ENCODE measurements at regions of chr20 and their contacts with region 1.

Region 1: DNA sequence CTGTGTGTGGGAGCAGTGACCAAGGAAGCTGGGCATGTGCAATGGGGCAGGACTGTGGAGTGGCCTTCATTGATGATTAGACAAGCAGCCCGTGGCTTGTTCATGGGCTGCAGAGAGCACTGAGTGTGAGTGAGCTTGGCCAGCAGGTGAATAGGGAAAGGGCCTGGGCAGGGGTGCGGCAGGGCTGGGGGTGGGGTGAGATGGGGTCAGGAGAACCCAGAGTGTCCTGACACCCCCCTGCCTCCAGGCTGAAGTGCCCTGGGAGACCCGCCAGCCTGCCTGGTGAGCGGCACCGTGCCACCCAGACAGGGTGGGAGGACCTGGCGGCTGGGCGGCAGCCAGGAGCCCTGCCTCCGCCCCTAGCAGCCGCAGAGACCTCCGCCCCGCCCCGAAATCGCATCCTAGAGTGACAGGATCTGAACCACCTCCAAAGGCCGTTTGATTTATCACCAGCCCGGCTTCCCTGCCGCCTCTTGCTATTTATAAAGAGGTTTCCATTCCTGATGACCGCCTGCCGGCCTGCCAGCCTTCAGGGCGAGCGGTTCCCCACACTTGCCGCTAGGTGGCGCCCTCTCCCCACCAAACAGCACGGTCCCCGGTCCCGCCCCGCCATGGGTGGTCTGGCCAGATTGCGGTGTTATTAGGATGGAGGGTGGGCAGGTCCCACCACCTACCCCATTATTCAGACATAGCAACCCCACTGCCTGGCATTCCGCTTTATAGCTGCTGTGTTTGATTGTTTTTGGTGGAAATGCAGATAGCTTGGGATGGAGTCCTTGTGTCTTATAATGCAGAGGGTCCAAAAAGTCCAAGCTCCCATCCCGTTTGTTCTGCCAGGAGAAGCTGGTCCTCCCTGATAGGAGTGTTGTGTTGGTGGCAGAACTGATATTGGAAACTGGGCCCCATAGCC is 3.5 kb downstream of the MYLK2 start:
- DNase-seq: no peak
- H3K4me3 ChIP-seq: no peak overlapping the region
- CTCF ChIP-seq: peak; percentile 98

Region 2: DNA sequence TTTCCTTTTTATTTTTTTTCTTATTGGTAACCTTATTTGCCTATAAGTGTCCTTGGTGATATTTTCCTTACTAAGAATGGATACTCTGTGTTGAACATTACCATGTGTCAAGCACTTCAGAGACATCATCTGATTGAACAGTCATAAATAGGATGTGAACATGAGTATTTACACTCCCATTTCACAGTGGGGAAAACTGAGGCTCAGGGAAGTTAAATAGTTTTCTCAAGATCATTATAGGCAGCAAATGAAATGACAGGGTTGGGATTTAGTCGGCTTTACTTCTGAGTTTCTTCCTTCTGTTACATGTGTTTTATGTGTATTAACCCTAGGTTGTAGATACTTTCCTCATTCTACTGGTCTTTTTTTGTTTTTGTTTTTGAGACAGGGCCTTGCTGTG is 48.3 kb before region 1 on chr20:
- CTCF ChIA-PET with region 1: no interaction called
- POLR2A ChIA-PET with region 1: no interaction called
- DNase-seq: no peak
- H3K4me3 ChIP-seq: no peak overlapping the region
- CTCF ChIP-seq: no peak

Region 3: GRCh38 chr20:31795390-31795789 is 27.3 kb before region 1 on chr20:
- CTCF ChIA-PET with region 1: interaction called, 14 read pairs
- POLR2A ChIA-PET with region 1: no interaction called
- DNase-seq: no peak
- H3K4me3 ChIP-seq: no peak overlapping the region
- CTCF ChIP-seq: no peak

Region 4: DNA sequence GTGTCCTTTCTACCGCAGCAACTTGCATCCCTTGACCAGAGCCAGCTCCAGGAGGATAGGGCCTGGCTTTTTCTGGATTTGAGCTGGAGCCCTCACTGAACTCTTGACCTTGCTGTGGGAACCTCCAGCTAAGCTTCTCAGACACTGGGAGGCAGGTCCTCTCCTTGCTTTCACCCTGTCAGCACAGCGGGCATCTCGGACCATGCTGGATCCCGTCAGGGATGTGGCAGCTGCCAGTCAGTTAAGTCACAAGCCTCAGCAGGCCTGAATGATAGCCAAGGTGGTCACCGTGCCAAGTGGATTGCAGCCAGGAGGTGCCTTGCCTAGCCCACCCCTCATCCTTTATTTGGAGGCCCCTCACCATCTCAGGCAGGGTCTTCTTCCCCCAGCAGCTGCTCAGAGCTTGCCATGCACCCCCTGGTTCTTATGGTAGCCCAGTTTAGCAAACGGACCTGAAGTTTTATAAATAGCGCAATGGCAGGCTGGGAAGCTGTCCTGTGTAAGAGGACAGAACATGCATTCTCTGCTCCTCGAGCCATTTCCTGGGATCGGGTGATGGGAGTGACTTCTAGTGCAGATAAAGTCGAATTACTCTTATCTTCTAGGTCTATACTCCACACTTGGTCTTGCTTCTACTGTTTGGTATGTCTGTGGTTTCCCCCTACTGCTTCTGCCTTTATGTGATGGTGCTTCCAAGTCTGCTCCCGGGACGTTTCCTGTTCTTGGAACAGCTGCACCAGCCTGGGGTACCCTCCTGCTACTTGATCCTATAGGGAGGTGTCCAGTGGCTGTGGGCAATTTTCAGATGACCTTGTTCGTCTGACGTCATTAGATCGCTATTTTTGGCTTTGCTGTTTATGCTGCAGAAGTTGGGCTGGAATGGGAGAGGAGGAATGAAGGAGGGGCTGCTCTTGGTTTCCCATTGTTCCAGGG is 10.6 kb before region 1 on chr20:
- CTCF ChIA-PET with region 1: interaction called, 91 read pairs
- POLR2A ChIA-PET with region 1: no interaction called
- DNase-seq: no peak
- H3K4me3 ChIP-seq: no peak overlapping the region
- CTCF ChIP-seq: no peak

Region 5: GRCh38 chr20:31835977-31836852 is 13.5 kb after region 1 on chr20:
- CTCF ChIA-PET with region 1: interaction called, 242 read pairs
- POLR2A ChIA-PET with region 1: no interaction called
- DNase-seq: no peak
- H3K4me3 ChIP-seq: no peak overlapping the region
- CTCF ChIP-seq: no peak

Region 6: GRCh38 chr20:32091888-32092346 is 269.2 kb after region 1 on chr20:
- CTCF ChIA-PET with region 1: interaction called, 47 read pairs
- POLR2A ChIA-PET with region 1: no interaction called
- DNase-seq: peak; percentile 16
- H3K4me3 ChIP-seq: no peak overlapping the region
- CTCF ChIP-seq: peak; percentile 89

Region 7: GRCh38 chr20:32411955-32412706 is 589.5 kb after region 1 on chr20:
- CTCF ChIA-PET with region 1: no interaction called
- POLR2A ChIA-PET with region 1: no interaction called
- DNase-seq: no peak
- H3K4me3 ChIP-seq: no peak overlapping the region
- CTCF ChIP-seq: no peak